GM10248 (cell line): ENCODE measurements at regions of chr6 and their contacts with region 1.

Region 1: DNA sequence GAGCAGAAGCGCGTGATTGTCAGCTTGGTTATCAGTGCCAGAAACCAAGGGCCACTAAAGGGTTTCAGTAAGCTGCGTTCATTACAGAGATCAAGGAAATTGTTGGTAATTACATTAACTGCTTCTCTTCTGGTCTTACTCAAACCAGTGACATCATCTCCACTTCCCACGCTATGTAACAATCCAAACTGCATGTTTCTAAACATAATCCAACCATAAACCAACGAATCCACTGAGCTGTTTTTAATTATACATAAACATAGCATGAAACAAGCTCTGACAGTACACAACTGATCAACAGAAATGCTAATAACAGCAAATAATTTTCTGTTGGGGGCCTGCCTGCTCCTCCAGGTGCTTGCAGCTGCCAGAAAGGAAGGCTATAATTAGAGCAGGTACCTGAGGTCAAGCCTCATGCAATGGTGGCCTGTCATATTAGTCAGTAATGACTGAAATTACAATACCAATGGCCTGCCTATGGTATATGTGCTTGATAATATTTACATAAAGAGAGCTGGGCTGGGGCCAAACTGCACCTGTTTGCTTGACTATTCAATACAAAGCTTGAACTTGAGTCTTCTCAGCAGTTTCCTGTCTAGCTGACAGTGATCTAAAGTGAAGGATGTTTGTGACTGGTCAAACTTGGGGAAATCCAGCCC is 40.1 kb downstream of the ILRUN start:
- DNase-seq: peak; percentile 74
- CTCF ChIP-seq: no peak

Region 2: DNA sequence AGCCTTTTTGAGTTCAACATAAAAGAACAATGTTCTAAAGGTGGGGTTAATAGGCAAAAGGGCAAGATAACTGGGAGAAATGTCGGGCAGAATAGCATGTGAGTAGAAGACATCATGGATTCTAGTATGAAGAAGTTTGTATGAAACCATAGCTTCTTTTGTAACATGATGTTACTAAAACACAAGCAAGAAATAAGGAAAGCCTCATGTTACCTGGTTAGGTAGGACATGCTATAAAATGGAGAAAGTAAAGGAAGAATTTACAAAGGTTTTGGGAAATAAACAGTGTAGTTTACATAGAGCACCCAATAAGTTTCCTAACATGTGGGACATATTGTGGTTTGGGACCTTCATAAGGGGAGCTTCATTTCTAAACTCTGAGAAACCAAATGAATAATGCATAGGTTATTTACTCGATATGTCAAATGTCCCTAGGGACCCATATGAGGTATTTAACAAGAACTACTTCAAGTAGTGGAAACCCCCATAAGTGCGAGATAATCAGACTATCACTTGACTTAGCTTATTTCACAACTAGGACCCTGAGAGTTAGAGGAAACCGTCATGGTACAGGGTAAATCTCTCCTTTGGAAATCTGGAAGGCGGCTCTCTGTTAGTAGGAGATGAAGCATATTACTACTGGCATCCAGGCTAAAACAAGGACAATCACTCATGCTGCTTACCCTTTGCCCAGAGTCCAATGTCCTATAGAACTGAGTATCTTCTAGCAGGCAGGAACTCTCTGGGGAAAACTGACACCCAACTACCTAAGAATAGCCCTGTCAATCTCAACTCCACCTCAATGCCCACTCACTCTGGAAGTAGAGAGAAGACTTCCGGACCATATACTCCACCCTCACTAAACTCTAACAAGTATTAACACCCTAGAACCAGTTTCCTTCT is 17.4 kb before region 1 on chr6:
- CTCF ChIA-PET with region 1: interaction called, 27 read pairs
- POLR2A ChIA-PET with region 1: interaction called, 14 read pairs
- DNase-seq: peak; percentile 63
- CTCF ChIP-seq: no peak

Region 3: DNA sequence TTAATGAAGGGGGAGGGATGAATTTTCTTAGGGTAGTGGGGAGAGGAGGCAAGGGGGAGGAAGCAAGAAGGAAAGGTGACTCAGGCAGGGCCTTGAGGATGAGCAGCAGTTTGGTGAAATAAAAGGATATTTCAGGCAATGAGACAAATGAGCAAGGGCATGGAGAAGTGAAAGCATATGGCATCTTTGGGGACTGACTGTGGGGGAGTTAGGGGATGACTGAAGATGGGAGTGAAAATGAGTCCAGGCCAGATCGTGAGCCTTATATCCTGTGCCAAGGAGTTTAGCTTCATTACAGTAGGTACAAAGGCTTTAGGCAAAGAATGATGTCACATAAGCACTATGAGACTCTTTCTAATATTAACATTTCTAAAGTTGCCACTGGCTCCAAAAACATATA is 11.8 kb before region 1 on chr6:
- CTCF ChIA-PET with region 1: interaction called, 27 read pairs
- POLR2A ChIA-PET with region 1: interaction called, 14 read pairs
- DNase-seq: no peak
- CTCF ChIP-seq: no peak

Region 4: DNA sequence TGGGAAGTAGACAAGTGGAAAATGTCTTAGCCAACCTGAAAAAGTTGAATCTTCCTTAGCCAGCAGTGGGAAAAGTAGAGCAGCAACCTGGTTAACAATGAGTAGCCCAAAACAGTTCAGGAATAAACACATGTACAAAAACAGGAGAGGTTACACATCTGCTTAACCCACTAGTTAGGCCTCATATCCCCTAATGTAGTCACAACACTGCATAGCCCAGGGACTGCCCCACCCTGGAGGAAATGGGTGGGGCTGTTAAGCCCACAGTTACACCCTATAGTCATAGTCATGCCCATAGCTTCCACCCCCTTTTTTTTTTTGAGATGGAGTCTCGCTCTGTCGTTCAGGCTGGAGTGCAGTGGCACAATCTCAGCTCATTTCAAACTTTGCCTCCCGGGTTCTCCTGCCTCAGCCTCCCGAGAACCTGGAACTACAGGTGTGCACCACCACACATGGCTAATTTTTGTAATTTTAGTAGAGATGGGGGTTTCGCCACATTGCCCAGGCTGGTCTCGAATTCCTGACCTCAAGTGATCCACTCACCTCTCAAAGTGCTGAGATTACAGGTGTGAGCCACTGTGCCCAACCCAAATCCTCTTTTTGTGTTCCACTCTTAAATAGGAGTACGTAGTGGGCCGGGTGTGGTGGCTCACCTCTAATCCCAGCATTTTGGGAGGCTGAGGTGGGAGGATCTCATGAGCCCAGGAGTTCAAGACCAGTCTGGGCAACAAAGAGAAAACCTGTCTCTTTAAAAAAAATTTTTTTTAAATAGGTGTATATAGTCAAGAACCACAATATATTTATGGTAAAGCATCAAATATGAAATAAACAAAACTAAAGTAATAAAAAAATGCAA is 15.5 kb after region 1 on chr6:
- CTCF ChIA-PET with region 1: interaction called, 16 read pairs
- POLR2A ChIA-PET with region 1: interaction called, 28 read pairs
- DNase-seq: peak; percentile 82
- CTCF ChIP-seq: no peak

Region 5: GRCh38 chr6:34890533-34890925 is 234.0 kb after region 1 on chr6:
- CTCF ChIA-PET with region 1: no interaction called
- POLR2A ChIA-PET with region 1: interaction called, 10 read pairs
- DNase-seq: no peak
- CTCF ChIP-seq: no peak

Region 6: DNA sequence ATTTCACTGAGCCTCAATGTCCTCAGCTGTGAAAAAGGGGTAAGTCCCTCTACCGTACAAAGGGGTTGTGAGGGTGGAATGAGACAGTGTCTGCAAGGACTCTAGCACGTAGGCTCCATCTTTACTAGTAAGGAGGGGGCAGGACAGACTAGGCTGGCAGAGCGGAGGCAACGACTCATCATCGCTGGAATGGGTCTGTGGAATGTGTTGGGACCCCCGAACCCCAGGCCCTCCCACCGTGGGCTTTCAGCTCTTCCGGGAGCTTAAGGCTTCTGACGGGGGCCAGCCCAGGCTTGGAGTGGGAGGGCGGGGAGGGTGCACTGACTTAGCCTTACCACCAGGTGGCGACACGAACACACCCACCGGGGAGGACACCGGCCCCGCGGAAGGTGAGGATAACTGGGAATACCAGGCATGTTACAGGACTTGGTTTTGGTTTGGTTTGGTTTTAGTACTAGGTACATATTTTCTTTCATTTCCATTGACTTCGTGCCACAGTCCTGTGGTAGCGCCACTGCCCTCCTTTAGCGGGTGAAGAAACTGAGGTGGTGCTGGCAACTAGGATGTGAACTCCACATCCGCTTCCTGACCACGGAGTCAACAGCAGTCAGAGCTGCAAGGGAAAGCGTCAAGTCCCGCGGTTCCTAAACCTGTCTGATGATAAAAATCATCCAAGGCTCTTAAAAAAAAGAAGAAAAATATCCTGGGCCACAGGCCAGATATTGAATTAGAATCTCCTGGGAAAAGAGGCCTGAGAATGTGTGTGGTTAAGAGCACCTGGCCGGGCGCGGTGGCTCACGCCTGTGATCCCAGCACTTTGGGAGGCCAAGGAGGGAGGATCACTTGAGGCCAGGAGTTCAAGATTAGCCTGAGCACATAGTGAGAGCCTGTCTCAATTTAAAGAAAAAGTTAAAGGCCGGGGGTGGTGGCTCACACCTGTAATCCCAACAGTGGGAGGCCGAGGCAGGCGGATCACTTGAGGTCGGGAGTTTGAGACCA is 866.5 kb after region 1 on chr6:
- CTCF ChIA-PET with region 1: no interaction called
- POLR2A ChIA-PET with region 1: no interaction called
- DNase-seq: peak; percentile 87
- CTCF ChIP-seq: peak; percentile 88